ENCODE measurements at regions of chr2 and their contacts with region 1.

Region 1: GRCh38 chr2:64144057-64145013 is at the start of gene PELI1:
- DNase-seq: peak; percentile 99
- H3K4me3 ChIP-seq: peak within 1 kb of the TSS; percentile 70 to 90 (median 83)
- H3K27ac ChIP-seq: peak within 1 kb of the TSS; percentile 74
- H3K4me1 ChIP-seq: peaks cover 18% of the 10 kb centered on the region
- H3K27me3 ChIP-seq: peaks cover 0 to 4% of the 10 kb centered on the region in 2 experiments
- CTCF ChIP-seq: peak in 1 of 2 donors; percentile 34
- POLR2A ChIP-seq: peak; percentile 95
- total RNA-seq, gene PELI1: 30.9 and 39.9 TPM in 2 replicates

Region 2: GRCh38 chr2:63588385-63589147 is 555.8 kb before region 1 on chr2 and contains the starts of genes MDH1 and WDPCP:
- CTCF ChIA-PET with region 1: no interaction called
- POLR2A ChIA-PET with region 1: no interaction called
- dilution Hi-C with region 1: no loop called
- intact Hi-C with region 1: no loop called
- DNase-seq: peak; percentile 99
- H3K4me3 ChIP-seq: peak within 1 kb of the TSS; percentile 62 to 89 (median 85)
- H3K27ac ChIP-seq: peak within 1 kb of the TSS; percentile 67
- H3K4me1 ChIP-seq: peaks cover 18% of the 10 kb centered on the region
- H3K27me3 ChIP-seq: no peaks in the 10 kb centered on the region
- CTCF ChIP-seq: no peak
- POLR2A ChIP-seq: peak; percentile 84
- total RNA-seq, gene MDH1: 98.8 and 107 TPM in 2 replicates
- total RNA-seq, gene WDPCP: 6.9 and 8.8 TPM in 2 replicates

Region 3: GRCh38 chr2:64013053-64013452 is 131.3 kb before region 1 on chr2:
- CTCF ChIA-PET with region 1: no interaction called
- POLR2A ChIA-PET with region 1: no interaction called
- dilution Hi-C with region 1: no loop called
- intact Hi-C with region 1: no loop called
- DNase-seq: no peak
- H3K4me3 ChIP-seq: no peak overlapping the region
- H3K27ac ChIP-seq: no peak overlapping the region
- H3K4me1 ChIP-seq: peaks cover 5% of the 10 kb centered on the region
- H3K27me3 ChIP-seq: no peaks in the 10 kb centered on the region
- CTCF ChIP-seq: no peak
- POLR2A ChIP-seq: no peak

Region 4: DNA sequence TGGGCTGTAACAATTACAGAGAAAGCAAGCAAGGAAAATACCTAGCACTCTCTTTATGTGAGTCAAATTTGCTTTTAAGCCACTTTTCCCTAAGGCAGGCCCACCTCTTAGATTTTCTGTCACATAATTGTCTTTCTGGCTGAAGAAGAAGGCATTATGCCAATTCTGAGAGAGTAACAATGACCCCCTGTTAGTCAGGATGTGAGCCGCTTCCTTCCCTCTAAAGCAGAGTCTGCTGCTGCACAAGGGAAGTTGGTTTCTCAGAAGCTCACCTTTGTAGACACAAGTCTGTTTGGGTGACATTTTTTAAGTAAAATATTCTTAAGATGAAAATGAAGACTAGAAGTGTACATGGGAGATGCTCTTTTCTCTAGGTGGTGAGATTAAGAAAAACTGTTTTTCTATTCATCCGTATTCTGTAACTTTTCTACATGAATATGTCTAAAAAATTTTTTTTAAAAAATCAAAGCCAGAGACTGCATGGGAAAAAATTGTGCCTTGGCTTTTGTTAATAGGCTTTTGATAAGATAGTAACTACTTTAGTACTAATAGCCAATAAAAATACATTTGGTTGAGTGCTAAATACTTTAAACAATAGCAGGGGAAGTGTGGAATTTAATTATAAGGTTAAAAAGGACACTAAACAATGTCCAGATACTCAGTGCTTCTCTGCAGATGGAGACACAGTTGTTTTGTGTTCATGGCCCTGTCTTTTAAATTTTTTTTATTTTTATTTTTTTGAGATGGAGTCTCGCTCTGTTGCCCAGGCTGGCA is 91.7 kb before region 1 on chr2:
- CTCF ChIA-PET with region 1: interaction called, 17 read pairs
- POLR2A ChIA-PET with region 1: no interaction called
- dilution Hi-C with region 1: no loop called
- intact Hi-C with region 1: loop called (anchors 1 kb)
- DNase-seq: peak; percentile 94
- H3K4me3 ChIP-seq: peak overlapping the region in 1 of 3 experiments; percentile 20
- H3K27ac ChIP-seq: peak overlapping the region; percentile 96
- H3K4me1 ChIP-seq: peaks cover 28% of the 10 kb centered on the region
- H3K27me3 ChIP-seq: no peaks in the 10 kb centered on the region
- CTCF ChIP-seq: no peak
- POLR2A ChIP-seq: no peak

Region 5: DNA sequence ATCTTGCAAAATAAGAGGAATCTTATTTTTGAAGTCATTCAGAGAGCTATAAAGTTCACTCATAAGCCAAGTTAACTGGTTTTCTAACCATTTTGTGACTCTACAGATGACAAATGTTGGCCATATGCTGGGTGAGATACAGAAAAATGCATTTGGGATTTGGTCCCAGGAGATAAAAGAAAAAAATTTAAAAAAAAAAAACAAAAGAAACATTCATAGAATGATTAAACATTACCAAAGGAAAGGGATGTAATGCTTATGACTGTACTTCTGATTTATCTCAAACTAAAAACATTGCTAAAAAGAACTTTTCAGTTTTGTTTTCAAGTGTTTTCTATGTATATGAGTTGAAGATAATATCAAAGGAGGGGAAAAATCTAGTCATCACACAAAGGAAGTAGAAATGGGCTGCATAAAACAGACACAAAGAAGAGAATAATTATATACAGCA is 43.2 kb before region 1 on chr2:
- CTCF ChIA-PET with region 1: interaction called, 13 read pairs
- POLR2A ChIA-PET with region 1: interaction called, 3 read pairs
- dilution Hi-C with region 1: no loop called
- intact Hi-C with region 1: no loop called
- DNase-seq: peak; percentile 84
- H3K4me3 ChIP-seq: peak overlapping the region in 1 of 3 experiments; percentile 34
- H3K27ac ChIP-seq: peak overlapping the region; percentile 60
- H3K4me1 ChIP-seq: peaks cover 39% of the 10 kb centered on the region
- H3K27me3 ChIP-seq: no peaks in the 10 kb centered on the region
- CTCF ChIP-seq: no peak
- POLR2A ChIP-seq: no peak

Region 6: DNA sequence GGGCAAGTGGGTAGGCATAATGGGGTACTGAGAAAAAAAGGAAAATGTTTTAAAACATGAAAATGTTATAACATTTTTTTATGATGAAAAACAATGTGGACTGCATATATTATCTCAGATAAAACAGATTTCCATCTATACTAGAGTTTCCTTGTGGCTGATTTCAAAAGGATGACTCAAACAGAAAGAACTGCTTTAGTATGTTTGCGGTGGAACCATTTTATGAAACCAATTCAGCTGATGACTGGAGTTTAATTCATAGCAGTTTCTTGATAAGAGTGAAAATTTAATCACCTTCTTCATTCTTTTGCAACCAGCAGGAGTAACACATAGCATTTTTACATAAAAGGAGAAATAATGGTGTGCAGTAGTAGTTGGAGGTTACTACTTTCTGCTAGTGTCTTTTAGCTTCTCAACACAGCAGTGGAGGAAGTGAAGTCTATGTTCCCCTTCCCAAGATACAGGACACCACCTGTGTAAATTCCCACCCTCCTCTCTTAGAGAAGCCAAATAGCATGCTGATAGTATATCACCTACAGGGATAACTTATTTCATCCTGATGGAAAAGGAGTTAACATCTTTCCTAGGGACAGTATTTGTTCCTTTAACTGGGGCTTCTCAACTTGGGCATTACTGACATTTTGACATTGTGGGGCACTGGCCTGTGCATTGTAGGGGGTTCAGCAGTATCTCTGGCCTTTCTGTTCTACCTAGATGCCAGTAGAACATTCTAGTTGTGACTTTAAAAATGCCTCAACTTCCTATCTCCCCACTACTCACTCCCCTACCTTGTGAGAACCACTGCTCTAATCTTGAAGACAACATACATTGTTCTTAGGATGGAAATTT is 30.0 kb before region 1 on chr2:
- CTCF ChIA-PET with region 1: no interaction called
- POLR2A ChIA-PET with region 1: no interaction called
- dilution Hi-C with region 1: no loop called
- intact Hi-C with region 1: loop called (anchors 1 kb)
- DNase-seq: peak; percentile 69
- H3K4me3 ChIP-seq: no peak overlapping the region
- H3K27ac ChIP-seq: peak overlapping the region; percentile 7
- H3K4me1 ChIP-seq: peaks cover 35% of the 10 kb centered on the region
- H3K27me3 ChIP-seq: no peaks in the 10 kb centered on the region
- CTCF ChIP-seq: no peak
- POLR2A ChIP-seq: no peak

Region 7: GRCh38 chr2:64228126-64228678 is 83.9 kb after region 1 on chr2:
- CTCF ChIA-PET with region 1: no interaction called
- POLR2A ChIA-PET with region 1: no interaction called
- dilution Hi-C with region 1: no loop called
- intact Hi-C with region 1: loop called (anchors 1 kb)
- DNase-seq: peak; percentile 84
- H3K4me3 ChIP-seq: peak overlapping the region; percentile 32 to 72 (median 70)
- H3K27ac ChIP-seq: peak overlapping the region; percentile 10
- H3K4me1 ChIP-seq: peaks cover 9% of the 10 kb centered on the region
- H3K27me3 ChIP-seq: no peaks in the 10 kb centered on the region
- CTCF ChIP-seq: no peak
- POLR2A ChIP-seq: peak; percentile 42

Region 8: GRCh38 chr2:64260817-64261216 is 116.5 kb after region 1 on chr2:
- CTCF ChIA-PET with region 1: no interaction called
- POLR2A ChIA-PET with region 1: no interaction called
- dilution Hi-C with region 1: no loop called
- intact Hi-C with region 1: loop called (anchors 1 kb)
- DNase-seq: peak; percentile 82
- H3K4me3 ChIP-seq: peak overlapping the region in 1 of 3 experiments; percentile 2
- H3K27ac ChIP-seq: peak overlapping the region; percentile 99
- H3K4me1 ChIP-seq: peaks cover 44% of the 10 kb centered on the region
- H3K27me3 ChIP-seq: no peaks in the 10 kb centered on the region
- CTCF ChIP-seq: no peak
- POLR2A ChIP-seq: peak; percentile 48

Region 9: GRCh38 chr2:65491381-65491909 is 1347.1 kb after region 1 on chr2:
- CTCF ChIA-PET with region 1: no interaction called
- POLR2A ChIA-PET with region 1: no interaction called
- dilution Hi-C with region 1: no loop called
- intact Hi-C with region 1: no loop called
- DNase-seq: peak; percentile 24
- H3K4me3 ChIP-seq: no peak overlapping the region
- H3K27ac ChIP-seq: no peak overlapping the region
- H3K4me1 ChIP-seq: peaks cover 5% of the 10 kb centered on the region
- H3K27me3 ChIP-seq: peaks cover 4% of the 10 kb centered on the region in 2 experiments
- CTCF ChIP-seq: no peak
- POLR2A ChIP-seq: no peak

Measured in endothelial cell of umbilical vein (primary cell).